Head of caudate nucleus (tissue), 42 donors: ENCODE measurements at regions of chr1 and their contacts with region 1.

Region 1: GRCh38 chr1:23979878-23980724 is at the start of gene SRSF10:
- DNase-seq: peak; percentile 96 to 99 (median 98)

Region 2: DNA sequence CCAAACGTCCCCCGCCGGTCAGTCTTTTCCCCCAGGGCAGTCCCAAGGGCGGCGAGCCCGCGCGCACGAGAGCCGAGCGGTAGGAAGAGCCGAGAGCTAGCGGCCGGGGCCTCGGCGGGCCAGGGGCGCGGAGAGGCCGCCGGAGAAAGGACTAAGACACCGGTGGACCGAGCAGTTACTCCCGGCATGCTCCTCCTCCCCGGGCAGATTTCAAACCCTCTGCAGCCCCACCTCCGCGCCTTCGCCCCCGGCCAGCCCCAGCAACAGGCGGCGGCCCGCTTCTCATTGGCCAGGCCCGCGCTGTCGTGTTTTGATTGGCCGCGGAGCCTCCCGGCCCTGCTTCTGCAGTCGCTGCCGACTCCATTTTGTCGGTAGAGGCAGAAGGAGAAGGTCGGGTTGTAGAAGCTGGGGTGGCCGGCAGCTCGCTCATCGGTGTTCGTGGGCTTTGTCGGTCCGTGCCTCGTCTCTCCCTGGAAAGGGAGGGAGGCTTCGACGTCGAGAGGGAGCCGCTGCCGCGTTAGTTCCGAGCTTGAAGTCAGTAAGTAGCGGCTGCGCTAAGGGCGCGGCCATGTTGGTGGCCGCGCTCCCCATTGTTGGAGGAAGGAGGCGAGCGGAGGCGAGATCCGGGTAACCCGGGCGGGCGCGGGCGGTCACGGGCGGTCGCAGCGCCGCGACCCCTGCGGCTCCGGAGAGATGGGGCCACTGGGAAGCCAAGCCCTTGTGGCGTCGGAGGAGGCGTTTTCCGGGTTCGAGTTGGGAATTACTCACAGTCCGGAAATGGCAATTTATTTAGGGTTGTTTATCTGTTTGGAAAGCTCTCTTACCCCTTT is 20.4 kb before region 1 on chr1 and contains the start of gene PNRC2:
- intact Hi-C with region 1: loop called (anchors 2 kb)
- DNase-seq: peak; percentile 94 to 99 (median 98)